KBM-7 (cell line): ENCODE measurements at regions of chr4 and their contacts with region 1.

Region 1: GRCh38 chr4:183256756-183257385 is 63.2 kb downstream of the CLDN22 start:
- DNase-seq: peak; percentile 54

Region 2: GRCh38 chr4:182752158-182752910 is 504.5 kb before region 1 on chr4:
- in situ Hi-C with region 1: no loop called
- DNase-seq: no peak

Region 3: DNA sequence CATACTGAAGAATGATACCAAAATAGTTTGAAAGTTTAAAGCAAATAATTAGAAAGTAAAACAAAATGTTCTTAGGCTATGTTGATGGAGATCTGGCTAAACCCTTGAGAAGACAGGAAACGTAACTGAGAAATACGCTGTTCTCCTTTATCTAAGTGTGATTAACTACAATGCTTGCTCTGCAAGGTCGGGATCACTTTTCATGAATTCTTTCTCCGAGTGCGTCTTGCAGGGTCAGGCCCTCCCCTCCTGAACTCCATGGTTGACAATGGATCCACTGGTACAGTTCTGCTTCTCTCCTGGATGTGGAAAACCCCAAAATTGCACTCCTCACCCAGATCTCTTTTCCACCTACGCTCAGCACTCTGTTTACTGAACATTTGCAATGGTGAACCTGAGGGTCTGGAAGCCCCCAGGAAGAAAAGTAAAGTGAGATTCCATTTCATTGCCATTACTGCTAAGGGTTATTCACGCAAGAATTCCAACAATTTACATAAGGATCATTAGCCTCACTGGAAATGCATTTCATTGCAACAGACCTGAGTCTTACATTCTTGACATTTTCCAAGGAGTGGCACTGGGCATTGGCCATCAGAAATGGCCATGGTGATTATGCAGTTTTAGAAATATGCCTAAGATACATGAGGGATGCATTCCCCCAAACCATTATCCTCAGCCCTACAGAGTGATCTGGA is 182.4 kb before region 1 on chr4:
- in situ Hi-C with region 1: loop called (anchors 10 kb)
- DNase-seq: no peak

Region 4: GRCh38 chr4:183507925-183508696 is 251.2 kb after region 1 on chr4:
- in situ Hi-C with region 1: no loop called
- DNase-seq: peak; percentile 39